ENCODE measurements at regions of chr11 and their contacts with region 1.

Region 1: GRCh38 chr11:83249972-83250593 is 36.1 kb downstream of the CCDC90B start:
- DNase-seq: peak; percentile 73
- H3K4me3 ChIP-seq: no peak overlapping the region
- H3K27ac ChIP-seq: no peak overlapping the region
- H3K4me1 ChIP-seq: peaks cover 10% of the 10 kb centered on the region
- CTCF ChIP-seq: peak; percentile 96

Region 2: DNA sequence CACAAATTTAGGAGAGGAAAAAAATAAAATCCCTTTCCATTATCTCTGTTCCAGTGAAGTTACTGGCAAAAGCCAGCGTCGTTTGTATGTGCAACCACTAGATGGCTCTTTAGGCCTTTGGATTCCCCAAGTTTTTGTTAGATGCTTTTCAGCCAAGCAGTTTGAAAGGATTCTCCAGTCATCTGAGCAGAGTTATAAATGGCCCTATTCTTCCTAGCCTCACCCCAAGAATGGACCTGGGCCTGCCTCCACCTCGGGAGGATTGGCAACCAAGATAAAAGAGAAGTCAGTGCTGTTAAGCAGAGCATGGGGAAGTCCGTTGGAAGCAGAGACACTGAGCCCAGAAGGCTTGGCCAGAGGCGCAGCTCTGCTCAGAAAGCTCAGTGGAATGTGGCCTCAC is 531.8 kb before region 1 on chr11:
- CTCF ChIA-PET with region 1: no interaction called
- POLR2A ChIA-PET with region 1: no interaction called
- intact Hi-C with region 1: loop called (anchors 5 kb)
- DNase-seq: peak; percentile 41
- H3K4me3 ChIP-seq: no peak overlapping the region
- H3K27ac ChIP-seq: no peak overlapping the region
- H3K4me1 ChIP-seq: no peaks in the 10 kb centered on the region
- CTCF ChIP-seq: peak; percentile 89

Region 3: DNA sequence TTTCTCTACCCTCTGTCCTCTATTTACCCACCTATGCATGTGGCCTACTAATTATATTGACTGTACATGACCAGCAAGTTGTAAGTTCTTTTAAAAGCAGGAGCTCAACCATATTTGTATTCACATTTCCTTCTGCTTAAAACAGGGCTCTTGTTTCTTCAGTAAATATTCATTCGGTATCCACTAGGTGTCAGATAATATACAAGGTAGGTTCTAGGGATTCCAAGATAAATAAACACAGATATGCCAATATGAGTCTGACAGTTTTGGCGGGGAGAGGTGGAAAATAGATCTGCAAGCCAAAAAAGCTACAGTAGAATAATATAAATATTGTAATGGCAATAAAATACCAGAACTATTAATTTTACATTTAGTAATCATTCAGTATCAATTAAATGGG is 163.0 kb before region 1 on chr11:
- CTCF ChIA-PET with region 1: interaction called, 3 read pairs
- POLR2A ChIA-PET with region 1: no interaction called
- intact Hi-C with region 1: loop called (anchors 2 kb)
- DNase-seq: peak; percentile 44
- H3K4me3 ChIP-seq: no peak overlapping the region
- H3K27ac ChIP-seq: no peak overlapping the region
- H3K4me1 ChIP-seq: no peaks in the 10 kb centered on the region
- CTCF ChIP-seq: peak; percentile 69

Region 4: DNA sequence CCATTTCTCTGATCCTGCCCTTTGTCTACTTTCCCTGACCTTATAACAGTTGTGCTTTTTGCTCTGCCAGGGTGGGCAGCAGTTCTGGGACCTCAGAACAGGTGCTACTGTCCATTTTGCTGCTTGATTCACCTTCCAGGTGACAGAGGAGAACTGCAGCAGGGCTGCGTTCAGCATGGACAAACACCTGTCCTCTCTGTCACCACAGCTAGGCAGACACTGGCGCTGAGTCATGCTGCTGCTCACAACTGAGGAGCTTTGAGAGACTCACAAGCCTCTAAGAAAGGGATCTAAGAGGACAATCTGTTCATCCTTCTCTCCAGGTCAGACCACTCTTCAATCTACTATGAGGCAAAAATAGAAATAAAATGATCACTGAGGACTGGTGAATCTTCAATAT is 1180.6 kb after region 1 on chr11:
- CTCF ChIA-PET with region 1: no interaction called
- POLR2A ChIA-PET with region 1: no interaction called
- intact Hi-C with region 1: no loop called
- DNase-seq: no peak
- H3K4me3 ChIP-seq: no peak overlapping the region
- H3K27ac ChIP-seq: no peak overlapping the region
- H3K4me1 ChIP-seq: no peaks in the 10 kb centered on the region
- CTCF ChIP-seq: no peak

Measured in OCI-LY7 (cell line).